ENCODE measurements at regions of chr1 and their contacts with region 1.

Region 1: GRCh38 chr1:32255072-32256071 is 4.3 kb downstream of the LCK start:
- DNase-seq: peak in 5 of 9 donors; percentile 50 to 68 (median 62)
- ATAC-seq: peak; percentile 31
- H3K4me3 ChIP-seq: peak overlapping the region; percentile 55
- H3K4me3 Mint-ChIP-seq: peak overlapping the region; percentile 88 to 100 (median 98)
- H3K27ac ChIP-seq: peak overlapping the region; percentile 91
- H3K27ac Mint-ChIP-seq: peak overlapping the region; percentile 90 to 99 (median 97)
- H3K4me1 ChIP-seq: peaks cover 39 to 41% of the 10 kb centered on the region in 2 donors
- H3K4me1 Mint-ChIP-seq: peaks cover 24 to 56% (median 48%) of the 10 kb centered on the region in 7 donors
- H3K27me3 ChIP-seq: no peaks in the 10 kb centered on the region
- H3K27me3 Mint-ChIP-seq: no peaks in the 10 kb centered on the region

Region 2: GRCh38 chr1:32266921-32267591 is 11.7 kb after region 1 on chr1:
- CTCF ChIA-PET with region 1: interaction called, 6 read pairs
- POLR2A ChIA-PET with region 1: interaction called, 738 read pairs
- intact Hi-C with region 1: loop called (anchors 1 kb)
- DNase-seq: peak in 6 of 9 donors; percentile 41 to 68 (median 52)
- ATAC-seq: peak; percentile 69
- H3K4me3 ChIP-seq: peak overlapping the region; percentile 18
- H3K4me3 Mint-ChIP-seq: peak overlapping the region; percentile 70 to 96 (median 86)
- H3K27ac ChIP-seq: peak overlapping the region; percentile 64
- H3K27ac Mint-ChIP-seq: peak overlapping the region; percentile 93 to 100 (median 99)
- H3K4me1 ChIP-seq: peaks cover 55 to 78% of the 10 kb centered on the region in 2 donors
- H3K4me1 Mint-ChIP-seq: peaks cover 42 to 72% (median 54%) of the 10 kb centered on the region in 7 donors
- H3K27me3 ChIP-seq: no peaks in the 10 kb centered on the region
- H3K27me3 Mint-ChIP-seq: no peaks in the 10 kb centered on the region

Region 3: GRCh38 chr1:32273388-32274208 is 18.2 kb after region 1 on chr1:
- CTCF ChIA-PET with region 1: interaction called, 30 read pairs
- POLR2A ChIA-PET with region 1: interaction called, 738 read pairs
- intact Hi-C with region 1: loop called in 1 of 2 experiments (anchors 1 kb)
- DNase-seq: peak; percentile 34 to 96 (median 88)
- ATAC-seq: peak; percentile 94
- H3K4me3 ChIP-seq: peak overlapping the region; percentile 49
- H3K4me3 Mint-ChIP-seq: peak overlapping the region; percentile 74 to 91 (median 88)
- H3K27ac ChIP-seq: peak overlapping the region; percentile 79
- H3K27ac Mint-ChIP-seq: peak overlapping the region; percentile 77 to 99 (median 97)
- H3K4me1 ChIP-seq: peaks cover 42 to 69% of the 10 kb centered on the region in 2 donors
- H3K4me1 Mint-ChIP-seq: peaks cover 45 to 86% (median 62%) of the 10 kb centered on the region in 7 donors
- H3K27me3 ChIP-seq: no peaks in the 10 kb centered on the region
- H3K27me3 Mint-ChIP-seq: no peaks in the 10 kb centered on the region

Measured in naive thymus-derived CD4-positive, alpha-beta T cell (primary cell).